Activated CD4-positive, alpha-beta memory T cell treated with anti-CD3 and anti-CD28 coated beads for 36 hours (primary cell): ENCODE measurements at regions of chr2 and their contacts with region 1.

Region 1: GRCh38 chr2:181241797-181242196 is 215.4 kb upstream of the ITGA4 start:
- DNase-seq: peak; percentile 46
- H3K4me3 Mint-ChIP-seq: no peak overlapping the region
- H3K27ac Mint-ChIP-seq: peak overlapping the region; percentile 77
- H3K4me1 Mint-ChIP-seq: peaks cover 32% of the 10 kb centered on the region
- H3K27me3 Mint-ChIP-seq: no peaks in the 10 kb centered on the region

Region 2: DNA sequence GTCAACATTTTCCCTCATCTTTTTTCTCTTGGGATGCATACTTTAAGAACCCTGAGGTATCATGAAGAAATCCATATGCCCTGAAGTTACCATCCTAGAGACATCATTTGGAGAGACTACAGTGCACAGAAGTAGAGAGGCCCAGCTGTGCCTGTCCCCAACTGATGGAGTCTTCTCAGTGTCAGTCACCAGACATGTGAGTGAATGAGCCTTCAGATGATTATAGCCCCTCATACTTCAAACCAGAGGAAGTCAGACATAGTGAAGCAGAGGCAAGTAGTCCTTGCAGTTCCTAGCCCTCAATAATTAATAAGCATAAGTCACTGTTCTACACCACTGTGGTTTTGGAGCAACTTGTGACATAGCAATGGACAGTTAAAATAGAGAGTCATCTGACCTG is 21.0 kb after region 1 on chr2:
- CTCF ChIA-PET with region 1: no interaction called
- POLR2A ChIA-PET with region 1: no interaction called
- intact Hi-C with region 1: no loop called
- DNase-seq: no peak
- H3K4me3 Mint-ChIP-seq: no peak overlapping the region
- H3K27ac Mint-ChIP-seq: no peak overlapping the region
- H3K4me1 Mint-ChIP-seq: peaks cover 21% of the 10 kb centered on the region
- H3K27me3 Mint-ChIP-seq: no peaks in the 10 kb centered on the region

Region 3: GRCh38 chr2:181275643-181276070 is 33.9 kb after region 1 on chr2:
- CTCF ChIA-PET with region 1: no interaction called
- POLR2A ChIA-PET with region 1: no interaction called
- intact Hi-C with region 1: loop called (anchors 5 kb)
- DNase-seq: peak; percentile 33
- H3K4me3 Mint-ChIP-seq: no peak overlapping the region
- H3K27ac Mint-ChIP-seq: peak overlapping the region; percentile 71
- H3K4me1 Mint-ChIP-seq: peaks cover 41% of the 10 kb centered on the region
- H3K27me3 Mint-ChIP-seq: no peaks in the 10 kb centered on the region

Region 4: DNA sequence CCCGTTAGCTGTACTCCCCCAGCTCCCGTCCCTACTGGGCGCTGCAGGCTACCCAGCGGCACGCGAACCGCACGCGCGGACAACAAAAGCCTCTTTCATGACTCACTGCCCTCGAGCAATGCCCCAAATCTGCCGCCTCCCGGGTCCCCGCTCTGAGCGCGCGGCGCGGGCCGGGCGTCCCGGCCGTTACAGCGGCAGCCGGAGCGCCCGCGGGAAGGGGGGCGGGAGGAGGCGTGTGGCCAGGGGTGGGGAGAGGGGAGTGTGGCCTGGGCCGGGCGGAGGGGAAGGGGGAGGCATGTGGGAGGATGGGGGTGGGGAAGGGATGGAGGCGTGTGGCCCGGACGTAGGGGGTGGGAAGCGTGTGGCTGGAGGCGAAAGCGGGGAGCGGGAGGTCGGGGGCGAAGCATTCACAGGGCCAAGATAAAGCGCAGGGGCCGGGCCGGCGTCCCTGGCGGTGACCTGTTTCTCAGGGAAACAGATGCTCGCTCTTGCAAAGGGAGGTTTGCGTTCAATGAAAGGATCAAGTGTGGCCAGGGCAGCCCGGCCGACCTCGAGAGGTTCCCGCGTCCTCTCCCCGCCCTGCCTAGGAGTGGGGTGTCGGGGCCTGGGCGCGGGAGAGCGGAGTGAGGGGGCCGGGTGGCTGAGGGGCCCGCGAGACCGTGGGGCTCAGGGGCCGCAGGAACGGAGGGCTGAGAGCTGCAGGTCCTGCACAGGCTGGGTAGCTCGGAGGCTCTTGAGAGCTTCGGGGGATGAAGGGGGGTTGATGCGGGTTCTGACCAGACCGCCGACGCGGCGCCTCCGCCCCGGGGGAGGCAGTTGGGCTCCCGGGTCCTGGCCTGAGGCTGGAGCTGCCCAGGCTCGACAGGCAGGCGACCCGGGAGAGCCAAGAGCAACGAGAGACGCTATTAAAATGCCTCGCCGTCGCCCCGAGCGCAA is 442.0 kb after region 1 on chr2:
- CTCF ChIA-PET with region 1: no interaction called
- POLR2A ChIA-PET with region 1: no interaction called
- intact Hi-C with region 1: loop called (anchors 10 kb)
- DNase-seq: peak; percentile 31
- H3K4me3 Mint-ChIP-seq: peak overlapping the region; percentile 56
- H3K27ac Mint-ChIP-seq: no peak overlapping the region
- H3K4me1 Mint-ChIP-seq: peaks cover 34% of the 10 kb centered on the region
- H3K27me3 Mint-ChIP-seq: peaks cover 79% of the 10 kb centered on the region